ACHN (cell line): ENCODE measurements at regions of chr5 and their contacts with region 1.

Region 1: DNA sequence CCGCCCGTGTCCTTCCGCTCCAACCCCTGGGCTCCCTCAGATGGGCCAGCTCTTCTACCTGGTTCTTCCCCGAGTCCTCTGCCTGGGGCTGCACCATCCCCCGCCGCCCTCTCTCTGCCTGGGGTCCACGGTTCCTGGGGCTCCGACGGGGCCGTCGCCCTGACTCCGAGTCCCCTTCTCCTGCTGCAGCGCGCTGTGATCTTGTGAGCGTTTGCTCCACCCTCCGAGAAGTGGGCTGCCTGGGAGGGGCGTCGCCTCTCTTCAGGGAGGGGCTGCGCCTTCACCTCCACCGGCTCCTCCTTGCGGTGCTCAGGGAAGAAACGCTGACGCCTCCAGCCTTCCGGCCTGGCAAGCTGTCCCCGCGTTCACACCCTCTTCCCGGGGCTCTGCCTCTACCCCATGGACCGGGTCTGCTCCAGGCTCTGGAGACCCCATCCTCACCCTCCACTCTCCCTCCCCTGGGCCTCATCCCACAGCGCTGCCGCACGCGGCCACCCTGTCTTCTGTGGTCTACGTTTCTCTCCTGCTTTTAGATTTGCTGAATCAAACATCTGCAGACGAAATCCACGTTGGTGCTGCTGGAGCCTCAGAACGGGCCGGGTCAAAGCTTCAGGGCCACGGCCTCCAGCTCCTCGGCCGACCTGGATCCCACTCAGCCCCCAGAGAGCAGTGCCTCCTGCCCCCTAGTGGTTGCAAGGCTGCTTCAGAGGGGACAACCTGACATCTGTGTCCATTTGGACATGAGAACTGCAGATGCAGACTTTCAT is 22.7 kb upstream of the SLC6A3 start:
- DNase-seq: peak; percentile 9

Region 2: GRCh38 chr5:1204693-1205242 is 263.2 kb before region 1 on chr5:
- in situ Hi-C with region 1: loop called (anchors 25 kb)
- DNase-seq: peak; percentile 32

Region 3: GRCh38 chr5:2163940-2164490 is 696.1 kb after region 1 on chr5:
- in situ Hi-C with region 1: no loop called
- DNase-seq: no peak